Mammary epithelial cell (primary cell): ENCODE measurements at regions of chr12 and their contacts with region 1.

Region 1: DNA sequence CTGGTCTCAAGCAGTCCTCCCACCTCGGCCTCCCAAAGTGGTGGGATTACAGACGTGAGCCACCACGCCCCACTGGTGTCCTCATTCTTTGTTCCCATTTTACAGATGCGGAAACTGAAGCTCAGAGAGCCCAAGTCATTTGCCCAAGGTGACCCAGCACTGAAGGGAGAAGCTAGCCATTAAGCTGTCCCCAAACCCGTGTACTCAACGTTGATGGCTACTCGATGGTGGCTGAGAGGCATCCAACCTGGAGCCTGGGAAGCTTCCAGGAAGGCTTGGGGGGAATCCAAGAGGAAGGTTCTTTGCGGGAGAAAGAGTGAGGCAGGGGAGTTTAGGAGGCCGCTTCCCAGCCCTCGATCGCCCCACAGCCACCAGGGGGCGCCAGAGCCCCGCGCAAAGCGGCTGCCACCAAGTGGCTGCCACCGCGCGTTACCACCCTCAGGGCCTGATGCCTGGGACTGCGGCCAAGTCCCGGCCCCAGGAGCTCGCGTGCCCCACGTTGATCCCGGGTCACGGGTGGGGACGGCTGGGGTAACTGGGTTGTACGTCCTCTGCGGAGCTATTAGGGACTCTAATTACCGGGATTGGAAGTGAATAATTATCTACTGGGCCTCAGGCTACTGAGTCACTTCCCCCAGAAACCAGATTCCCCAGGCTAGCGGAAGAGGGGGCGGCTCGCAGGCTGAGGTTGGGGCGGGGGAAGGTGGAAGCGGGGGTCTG is 8.8 kb upstream of the SH2B3 start:
- DNase-seq: peak; percentile 75
- H3K4me3 ChIP-seq: peak overlapping the region in 1 of 3 experiments; percentile 31
- H3K27ac ChIP-seq: peak overlapping the region; percentile 36
- H3K4me1 ChIP-seq: peaks cover 10% of the 10 kb centered on the region
- H3K27me3 ChIP-seq: no peaks in the 10 kb centered on the region
- CTCF ChIP-seq: peak; percentile 73 to 100

Region 2: GRCh38 chr12:111444925-111445725 is 48.2 kb after region 1 on chr12:
- CTCF ChIA-PET with region 1: no interaction called
- dilution Hi-C with region 1: no loop called
- in situ Hi-C with region 1: loop called (anchors 5 kb)
- intact Hi-C with region 1: no loop called
- DNase-seq: no peak
- H3K4me3 ChIP-seq: no peak overlapping the region
- H3K27ac ChIP-seq: no peak overlapping the region
- H3K4me1 ChIP-seq: peaks cover 37% of the 10 kb centered on the region
- H3K27me3 ChIP-seq: no peaks in the 10 kb centered on the region
- CTCF ChIP-seq: no peak

Region 3: GRCh38 chr12:111482462-111482861 is 85.6 kb after region 1 on chr12:
- CTCF ChIA-PET with region 1: no interaction called
- dilution Hi-C with region 1: no loop called
- in situ Hi-C with region 1: no loop called
- intact Hi-C with region 1: loop called (anchors 1 kb)
- DNase-seq: no peak
- H3K4me3 ChIP-seq: no peak overlapping the region
- H3K27ac ChIP-seq: no peak overlapping the region
- H3K4me1 ChIP-seq: no peaks in the 10 kb centered on the region
- H3K27me3 ChIP-seq: no peaks in the 10 kb centered on the region
- CTCF ChIP-seq: peak; percentile 20 to 32

Region 4: DNA sequence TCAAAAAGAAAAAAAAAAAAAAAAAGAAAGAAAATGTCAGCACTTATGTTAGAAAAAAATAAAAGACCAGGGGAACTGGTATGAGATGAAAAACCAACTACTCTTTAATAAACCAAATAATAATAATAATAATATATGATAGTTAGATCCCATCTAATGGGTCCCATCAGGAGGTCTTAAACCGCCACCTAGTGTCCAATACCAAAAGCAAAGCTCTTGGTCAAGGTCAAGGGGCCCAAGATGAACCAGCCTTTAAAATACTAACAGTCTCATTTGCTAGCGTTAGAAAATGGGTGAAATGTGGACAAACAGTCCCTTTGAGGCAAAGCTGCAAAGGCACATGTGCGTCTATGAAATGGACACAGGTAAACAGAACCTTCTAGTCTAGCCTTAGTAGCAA is 276.6 kb after region 1 on chr12:
- CTCF ChIA-PET with region 1: no interaction called
- dilution Hi-C with region 1: no loop called
- in situ Hi-C with region 1: no loop called
- intact Hi-C with region 1: loop called (anchors 2 kb)
- DNase-seq: no peak
- H3K4me3 ChIP-seq: no peak overlapping the region
- H3K27ac ChIP-seq: no peak overlapping the region
- H3K4me1 ChIP-seq: no peaks in the 10 kb centered on the region
- H3K27me3 ChIP-seq: no peaks in the 10 kb centered on the region
- CTCF ChIP-seq: peak; percentile 38 to 47

Region 5: DNA sequence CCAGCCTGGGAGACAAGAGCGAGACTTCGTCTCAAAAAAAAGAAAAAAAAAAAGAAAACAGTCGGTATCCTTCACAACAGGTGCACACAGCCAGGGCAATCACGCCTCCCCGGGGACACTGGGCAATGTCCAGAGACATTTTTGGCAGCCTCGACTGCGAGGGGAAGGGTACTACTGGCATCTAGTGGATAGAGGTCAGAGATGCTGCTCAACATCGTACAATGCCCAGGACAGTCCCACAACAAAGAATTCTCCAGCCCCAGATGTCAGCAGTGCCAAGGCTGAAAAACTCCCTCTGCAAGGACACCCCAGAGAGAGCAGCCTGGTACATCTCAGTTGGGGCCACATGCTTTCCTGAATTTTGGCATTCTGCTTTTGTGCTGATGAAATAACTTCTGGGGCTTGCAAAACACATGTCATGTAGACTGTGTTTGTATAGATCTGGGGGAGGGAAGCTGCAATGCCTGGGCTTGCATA is 391.3 kb after region 1 on chr12:
- CTCF ChIA-PET with region 1: no interaction called
- dilution Hi-C with region 1: no loop called
- in situ Hi-C with region 1: no loop called
- intact Hi-C with region 1: loop called (anchors 5 kb)
- DNase-seq: no peak
- H3K4me3 ChIP-seq: no peak overlapping the region
- H3K27ac ChIP-seq: no peak overlapping the region
- H3K4me1 ChIP-seq: no peaks in the 10 kb centered on the region
- H3K27me3 ChIP-seq: no peaks in the 10 kb centered on the region
- CTCF ChIP-seq: peak; percentile 27 to 81